ENCODE measurements at regions of chr3 and their contacts with region 1.

Region 1: DNA sequence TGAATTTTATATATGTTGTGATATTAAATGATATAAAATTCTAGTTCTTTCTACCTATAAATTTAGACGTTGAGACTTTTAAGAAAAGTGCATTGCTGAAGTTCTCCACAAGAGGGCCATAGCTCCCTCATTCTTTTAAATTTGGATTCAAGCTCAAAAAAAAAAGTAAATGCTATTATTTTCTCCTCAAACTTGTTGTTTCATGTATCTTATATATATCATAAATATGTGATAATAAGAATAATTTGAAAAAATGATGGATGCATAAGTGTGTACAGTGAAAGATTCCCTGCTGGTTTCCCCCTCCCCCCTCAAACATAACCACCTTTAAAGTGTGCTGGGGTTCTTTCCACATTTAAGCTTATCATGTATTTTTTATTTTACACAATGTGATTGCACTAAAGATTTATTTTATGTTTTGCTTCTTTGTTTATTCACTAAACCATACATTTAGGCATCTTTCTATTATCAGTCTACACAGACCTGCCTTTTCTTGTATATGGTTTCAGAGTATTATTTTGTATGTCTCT is 769.4 kb upstream of the GOLIM4 start:
- DNase-seq: peak; percentile 3
- H3K4me3 ChIP-seq: no peak overlapping the region
- H3K27ac ChIP-seq: no peak overlapping the region
- H3K4me1 ChIP-seq: no peaks in the 10 kb centered on the region; a peak in 1 of 4 replicates
- H3K27me3 ChIP-seq: no peaks in the 10 kb centered on the region; the same call in 1 of the 2 replicates
- CTCF ChIP-seq: peak; percentile 84
- EP300 ChIP-seq: no peak
- RAD21 ChIP-seq: peak; percentile 64

Region 2: DNA sequence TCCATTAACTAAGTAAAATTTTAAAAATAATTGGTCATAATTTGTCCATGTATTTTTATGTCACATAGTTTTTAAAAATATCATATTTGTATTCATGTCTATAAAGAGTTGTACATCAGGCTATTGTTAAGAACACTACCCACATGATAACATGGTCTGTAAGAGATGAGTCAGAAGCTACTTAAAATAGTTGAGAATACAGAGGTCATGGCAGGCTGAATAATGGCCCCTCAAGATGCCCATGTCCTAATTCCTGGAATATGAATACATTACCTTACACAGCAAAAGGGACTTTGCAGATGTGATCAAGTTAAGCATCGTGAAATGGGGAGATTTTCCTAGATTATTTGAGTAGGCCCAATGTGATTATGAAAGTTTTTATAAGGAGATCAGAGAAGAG is 13.6 kb after region 1 on chr3:
- CTCF ChIA-PET with region 1: interaction called, 40 read pairs
- POLR2A ChIA-PET with region 1: no interaction called
- DNase-seq: no peak
- H3K4me3 ChIP-seq: no peak overlapping the region
- H3K27ac ChIP-seq: no peak overlapping the region
- H3K4me1 ChIP-seq: no peaks in the 10 kb centered on the region
- H3K27me3 ChIP-seq: no peaks in the 10 kb centered on the region
- CTCF ChIP-seq: no peak
- EP300 ChIP-seq: no peak
- RAD21 ChIP-seq: no peak

Region 3: GRCh38 chr3:168884353-168884903 is 19.3 kb after region 1 on chr3:
- CTCF ChIA-PET with region 1: interaction called, 11 read pairs
- POLR2A ChIA-PET with region 1: no interaction called
- DNase-seq: no peak
- H3K4me3 ChIP-seq: no peak overlapping the region
- H3K27ac ChIP-seq: no peak overlapping the region
- H3K4me1 ChIP-seq: no peaks in the 10 kb centered on the region
- H3K27me3 ChIP-seq: no peaks in the 10 kb centered on the region
- CTCF ChIP-seq: no peak
- EP300 ChIP-seq: no peak
- RAD21 ChIP-seq: no peak

Region 4: DNA sequence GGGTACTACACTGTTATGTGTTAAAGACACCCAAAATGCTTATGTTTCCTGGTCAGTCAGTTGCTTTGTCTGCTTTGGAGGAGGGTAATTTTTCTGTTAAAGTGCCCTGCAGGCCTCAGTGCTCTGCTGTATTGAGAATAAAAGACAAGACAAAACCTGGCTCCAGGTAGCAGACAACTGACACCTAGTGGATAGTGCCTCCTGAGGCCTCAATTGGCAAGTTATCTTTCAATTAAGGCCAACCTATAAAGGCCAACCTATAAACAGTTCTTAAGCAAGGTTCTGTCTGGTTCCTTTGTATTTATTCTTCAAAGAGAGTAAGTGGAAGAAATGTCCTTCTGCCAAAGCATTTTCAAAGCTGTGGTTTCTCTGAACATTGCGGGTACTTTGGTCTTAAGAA is 24.6 kb after region 1 on chr3:
- CTCF ChIA-PET with region 1: interaction called, 11 read pairs
- POLR2A ChIA-PET with region 1: no interaction called
- DNase-seq: no peak
- H3K4me3 ChIP-seq: no peak overlapping the region
- H3K27ac ChIP-seq: no peak overlapping the region
- H3K4me1 ChIP-seq: no peaks in the 10 kb centered on the region
- H3K27me3 ChIP-seq: no peaks in the 10 kb centered on the region
- CTCF ChIP-seq: no peak
- EP300 ChIP-seq: no peak
- RAD21 ChIP-seq: no peak

Region 5: DNA sequence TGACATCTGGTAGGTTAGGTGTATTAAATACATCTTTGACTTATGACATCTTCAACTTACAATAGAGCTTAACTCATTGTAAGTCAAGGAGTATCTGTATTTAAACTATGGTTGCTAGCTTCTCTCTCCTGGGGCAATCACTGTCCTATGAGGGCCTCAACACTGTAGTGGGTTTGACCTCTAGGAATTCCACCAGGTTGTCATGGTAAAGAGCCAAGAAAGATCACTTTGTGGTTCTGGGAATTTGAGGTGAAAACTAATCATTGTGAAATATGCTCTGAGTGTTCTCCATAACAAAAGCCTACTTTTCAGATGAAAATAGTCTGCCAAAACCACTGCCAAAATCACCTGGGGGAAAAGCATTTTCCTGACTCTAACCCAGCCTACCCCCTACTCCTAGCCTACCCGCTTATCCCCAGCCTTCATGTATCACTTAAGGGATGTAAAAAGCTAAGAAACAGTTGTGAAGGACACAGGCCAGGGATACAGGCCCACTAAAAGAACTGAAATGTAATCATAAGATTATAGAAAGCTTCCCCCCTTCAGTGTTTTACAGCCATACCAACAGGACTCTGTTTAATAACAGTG is 74.7 kb after region 1 on chr3:
- CTCF ChIA-PET with region 1: no interaction called
- POLR2A ChIA-PET with region 1: no interaction called
- DNase-seq: no peak
- H3K4me3 ChIP-seq: no peak overlapping the region
- H3K27ac ChIP-seq: no peak overlapping the region
- H3K4me1 ChIP-seq: no peaks in the 10 kb centered on the region
- H3K27me3 ChIP-seq: no peaks in the 10 kb centered on the region
- CTCF ChIP-seq: no peak
- EP300 ChIP-seq: no peak
- RAD21 ChIP-seq: no peak